Heart right ventricle (tissue), 16 donors: ENCODE measurements at regions of chr13 and their contacts with region 1.

Region 1: GRCh38 chr13:112643759-112644459 is 45.9 kb upstream of the ATP11A start:
- DNase-seq: no peak
- ATAC-seq: no peak
- H3K4me3 ChIP-seq: no peak overlapping the region
- H3K27ac ChIP-seq: no peak overlapping the region
- H3K4me1 ChIP-seq: peaks cover 0 to 16% (median 0%) of the 10 kb centered on the region in 9 donors
- H3K27me3 ChIP-seq: peaks cover 0 to 18% (median 12%) of the 10 kb centered on the region in 7 donors
- CTCF ChIP-seq: no peak

Region 2: GRCh38 chr13:112849500-112849899 is 205.6 kb after region 1 on chr13:
- intact Hi-C with region 1: loop called in 1 of 10 experiments (anchors 10 kb)
- DNase-seq: no peak
- ATAC-seq: no peak
- H3K4me3 ChIP-seq: no peak overlapping the region
- H3K27ac ChIP-seq: no peak overlapping the region
- H3K4me1 ChIP-seq: no peaks in the 10 kb centered on the region
- H3K27me3 ChIP-seq: no peaks in the 10 kb centered on the region
- CTCF ChIP-seq: no peak